ENCODE measurements at regions of chr12 and their contacts with region 1.

Region 1: DNA sequence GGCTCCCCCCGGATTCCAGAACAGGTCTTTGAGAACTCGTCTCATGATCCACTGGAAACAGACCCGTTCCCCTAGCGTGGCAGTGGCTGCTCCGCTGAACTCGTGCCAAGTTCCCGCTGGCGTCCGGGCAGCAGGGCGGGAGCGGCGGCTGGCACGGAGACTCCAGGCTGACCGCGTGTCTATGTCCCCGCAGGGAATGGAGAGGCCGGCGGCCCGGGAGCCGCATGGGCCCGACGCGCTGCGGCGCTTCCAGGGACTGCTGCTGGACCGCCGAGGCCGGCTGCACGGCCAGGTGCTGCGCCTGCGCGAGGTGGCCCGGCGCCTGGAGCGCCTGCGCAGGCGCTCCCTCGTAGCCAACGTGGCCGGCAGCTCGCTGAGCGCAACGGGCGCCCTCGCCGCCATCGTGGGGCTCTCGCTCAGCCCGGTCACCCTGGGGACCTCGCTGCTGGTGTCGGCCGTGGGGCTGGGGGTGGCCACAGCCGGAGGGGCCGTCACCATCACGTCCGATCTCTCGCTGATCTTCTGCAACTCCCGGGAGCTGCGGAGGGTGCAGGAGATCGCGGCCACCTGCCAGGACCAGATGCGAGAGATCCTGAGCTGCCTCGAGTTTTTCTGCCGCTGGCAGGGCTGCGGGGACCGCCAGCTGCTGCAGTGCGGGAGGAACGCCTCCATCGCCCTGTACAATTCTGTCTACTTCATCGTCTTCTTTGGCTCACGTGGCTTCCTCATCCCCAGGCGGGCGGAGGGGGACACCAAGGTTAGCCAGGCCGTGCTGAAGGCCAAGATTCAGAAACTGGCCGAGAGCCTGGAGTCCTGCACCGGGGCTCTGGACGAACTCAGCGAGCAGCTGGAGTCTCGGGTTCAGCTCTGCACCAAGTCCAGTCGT is 1.5 kb downstream of the APOLD1 start:
- DNase-seq: peak; percentile 79 to 84 (median 79)
- H3K4me3 ChIP-seq: peak overlapping the region; percentile 49 to 88 (median 64)
- H3K4me3 Mint-ChIP-seq: peak overlapping the region; percentile 84 to 89
- H3K27ac ChIP-seq: peak overlapping the region; percentile 11 to 64
- H3K27ac Mint-ChIP-seq: peak overlapping the region in 6 of 7 donors; percentile 7 to 81 (median 38)
- H3K4me1 ChIP-seq: peaks cover 15 to 18% of the 10 kb centered on the region in 2 donors
- H3K4me1 Mint-ChIP-seq: peaks cover 12% of the 10 kb centered on the region
- H3K27me3 ChIP-seq: no peaks in the 10 kb centered on the region
- H3K27me3 Mint-ChIP-seq: peaks cover 1 to 2% (median 2%) of the 10 kb centered on the region in 3 donors
- CTCF ChIP-seq: peak; percentile 16

Region 2: GRCh38 chr12:13233830-13234641 is 447.1 kb after region 1 on chr12:
- intact Hi-C with region 1: loop called in 1 of 2 experiments (anchors 10 kb)
- DNase-seq: peak; percentile 4 to 32 (median 16)
- H3K4me3 ChIP-seq: no peak overlapping the region
- H3K4me3 Mint-ChIP-seq: no peak overlapping the region
- H3K27ac ChIP-seq: no peak overlapping the region
- H3K27ac Mint-ChIP-seq: peak overlapping the region in 1 of 7 donors; percentile 48
- H3K4me1 ChIP-seq: no peaks in the 10 kb centered on the region
- H3K4me1 Mint-ChIP-seq: no peaks in the 10 kb centered on the region
- H3K27me3 ChIP-seq: no peaks in the 10 kb centered on the region
- H3K27me3 Mint-ChIP-seq: peaks cover 2 to 3% (median 2%) of the 10 kb centered on the region in 3 donors
- CTCF ChIP-seq: peak; percentile 82